HepG2 (cell line): ENCODE measurements at regions of chr12 and their contacts with region 1.

Region 1: DNA sequence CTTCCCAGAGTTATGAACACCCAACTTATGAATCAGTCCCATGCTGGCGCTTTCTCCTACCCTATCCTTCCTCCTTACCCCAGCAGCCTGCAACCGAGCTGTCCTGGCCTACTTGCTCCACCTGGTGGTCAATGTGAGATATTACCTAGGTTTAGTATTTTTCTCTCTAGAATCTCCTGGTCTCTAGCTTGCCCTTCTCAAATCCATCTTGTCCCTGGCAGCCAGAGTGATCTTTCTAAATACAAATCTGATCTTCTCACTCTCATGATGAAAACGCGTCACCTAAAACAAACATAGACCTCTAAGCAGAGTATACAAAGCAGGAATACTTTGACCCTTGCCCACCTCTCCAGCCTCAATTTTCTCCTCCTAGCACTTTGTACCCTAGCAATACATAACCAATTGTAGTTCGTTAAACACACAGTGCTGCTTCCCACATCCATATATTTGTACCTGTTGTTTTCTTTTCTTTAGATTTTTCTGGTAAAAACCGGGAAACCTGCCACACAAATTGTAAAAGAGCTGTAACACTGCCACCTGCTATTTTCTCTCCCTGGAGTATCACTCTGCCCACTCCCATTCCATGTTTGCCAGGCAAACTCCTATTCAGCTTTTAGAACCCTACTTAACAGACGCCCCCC is 20.0 kb upstream of the TCP11L2 start:
- DNase-seq: peak; percentile 97
- ATAC-seq: peak; percentile 94
- H3K4me3 ChIP-seq: peak overlapping the region in 2 of 3 experiments; percentile 9 to 25; a peak in 2 of 6 replicates
- H3K27ac ChIP-seq: peak overlapping the region; percentile 77
- H3K4me1 ChIP-seq: peaks cover 87% of the 10 kb centered on the region
- H3K27me3 ChIP-seq: peaks cover 0 to 17% of the 10 kb centered on the region in 2 experiments; a peak in 2 of 5 replicates
- CTCF ChIP-seq: peak; percentile 89
- EP300 ChIP-seq: peak; percentile 53 to 91; a peak in 3 of 4 replicates
- POLR2A ChIP-seq: no peak
- RAD21 ChIP-seq: peak; percentile 89

Region 2: DNA sequence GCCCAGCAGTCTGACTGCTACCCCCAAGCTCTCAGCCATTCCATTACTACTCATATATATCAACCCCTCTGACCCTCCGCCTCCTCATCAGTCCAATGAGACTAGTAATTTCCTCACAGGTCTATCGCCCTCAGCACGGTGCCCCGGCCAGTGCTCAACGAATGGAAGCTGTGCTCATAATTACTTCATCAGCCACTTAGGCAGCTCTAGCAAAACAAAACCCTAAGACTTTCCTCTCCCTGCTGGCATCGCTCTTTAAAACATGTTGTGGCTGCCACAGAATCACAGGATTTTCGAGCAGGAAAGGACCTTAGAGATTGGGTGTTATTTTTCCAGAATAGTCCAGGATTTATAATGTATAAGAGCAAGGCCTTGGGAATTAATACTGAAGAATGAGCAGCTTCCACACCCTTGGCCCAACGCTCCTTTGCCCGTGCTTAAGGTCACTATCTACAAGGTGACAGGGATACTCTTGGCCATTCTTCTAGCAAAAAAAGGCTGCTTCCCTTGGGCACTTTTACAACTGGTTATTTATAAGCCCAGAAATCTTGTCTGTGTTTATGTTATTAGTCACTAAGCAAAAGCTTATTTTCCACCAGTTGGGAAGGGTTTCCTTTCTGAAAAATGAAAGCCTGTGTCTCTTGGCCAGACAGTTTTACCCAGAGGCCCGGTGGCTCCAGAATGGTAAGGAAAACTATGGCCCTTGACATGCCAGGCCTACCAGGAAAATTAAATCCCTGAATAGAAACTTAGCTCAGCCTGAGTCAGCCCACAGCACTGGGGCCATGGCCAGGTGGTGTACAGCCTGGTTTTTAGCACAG is 191.8 kb before region 1 on chr12:
- CTCF ChIA-PET with region 1: no interaction called
- POLR2A ChIA-PET with region 1: no interaction called
- in situ Hi-C with region 1: loop called (anchors 10 kb)
- intact Hi-C with region 1: no loop called
- DNase-seq: no peak
- ATAC-seq: no peak
- H3K4me3 ChIP-seq: no peak overlapping the region
- H3K27ac ChIP-seq: no peak overlapping the region
- H3K4me1 ChIP-seq: peaks cover 28% of the 10 kb centered on the region
- H3K27me3 ChIP-seq: no peaks in the 10 kb centered on the region
- CTCF ChIP-seq: no peak
- EP300 ChIP-seq: no peak
- POLR2A ChIP-seq: no peak
- RAD21 ChIP-seq: no peak

Region 3: GRCh38 chr12:106223485-106224354 is 58.9 kb before region 1 on chr12:
- CTCF ChIA-PET with region 1: interaction called, 40 read pairs
- POLR2A ChIA-PET with region 1: interaction called, 17 read pairs
- in situ Hi-C with region 1: loop called (anchors 5 kb)
- intact Hi-C with region 1: loop called (anchors 1 kb)
- DNase-seq: peak; percentile 45
- ATAC-seq: peak; percentile 90
- H3K4me3 ChIP-seq: no peak overlapping the region
- H3K27ac ChIP-seq: no peak overlapping the region
- H3K4me1 ChIP-seq: peaks cover 11% of the 10 kb centered on the region
- H3K27me3 ChIP-seq: peaks cover 0 to 4% of the 10 kb centered on the region in 2 experiments; a peak in 1 of 5 replicates
- CTCF ChIP-seq: peak; percentile 93
- EP300 ChIP-seq: no peak
- POLR2A ChIP-seq: no peak
- RAD21 ChIP-seq: peak; percentile 84

Region 4: GRCh38 chr12:106247674-106248311 is 34.8 kb before region 1 on chr12 and contains the start of gene CKAP4:
- CTCF ChIA-PET with region 1: no interaction called
- POLR2A ChIA-PET with region 1: interaction called, 13 read pairs
- in situ Hi-C with region 1: no loop called
- intact Hi-C with region 1: loop called (anchors 2 kb)
- DNase-seq: peak; percentile 30
- ATAC-seq: peak; percentile 71
- H3K4me3 ChIP-seq: peak within 1 kb of the TSS; percentile 80 to 90 (median 83)
- H3K27ac ChIP-seq: peak within 1 kb of the TSS; percentile 68
- H3K4me1 ChIP-seq: peaks cover 49% of the 10 kb centered on the region
- H3K27me3 ChIP-seq: peaks cover 0 to 4% of the 10 kb centered on the region in 2 experiments; a peak in 1 of 5 replicates
- CTCF ChIP-seq: no peak
- EP300 ChIP-seq: no peak
- POLR2A ChIP-seq: peak in 1 of 2 experiments; percentile 45; a peak in 1 of 4 replicates
- RAD21 ChIP-seq: peak; percentile 35; the same call in 1 of the 2 replicates
- total RNA-seq, gene CKAP4: 37.3 and 70.2 TPM in 2 replicates

Region 5: GRCh38 chr12:106296193-106296877 is 13.8 kb after region 1 on chr12:
- CTCF ChIA-PET with region 1: no interaction called
- POLR2A ChIA-PET with region 1: interaction called, 10 read pairs
- in situ Hi-C with region 1: no loop called
- intact Hi-C with region 1: no loop called
- DNase-seq: peak; percentile 80
- ATAC-seq: peak; percentile 82
- H3K4me3 ChIP-seq: no peak overlapping the region
- H3K27ac ChIP-seq: no peak overlapping the region
- H3K4me1 ChIP-seq: peaks cover 51% of the 10 kb centered on the region
- H3K27me3 ChIP-seq: no peaks in the 10 kb centered on the region
- CTCF ChIP-seq: no peak
- EP300 ChIP-seq: peak in 1 of 2 experiments; percentile 51; a peak in 1 of 4 replicates
- POLR2A ChIP-seq: no peak
- RAD21 ChIP-seq: no peak

Region 6: DNA sequence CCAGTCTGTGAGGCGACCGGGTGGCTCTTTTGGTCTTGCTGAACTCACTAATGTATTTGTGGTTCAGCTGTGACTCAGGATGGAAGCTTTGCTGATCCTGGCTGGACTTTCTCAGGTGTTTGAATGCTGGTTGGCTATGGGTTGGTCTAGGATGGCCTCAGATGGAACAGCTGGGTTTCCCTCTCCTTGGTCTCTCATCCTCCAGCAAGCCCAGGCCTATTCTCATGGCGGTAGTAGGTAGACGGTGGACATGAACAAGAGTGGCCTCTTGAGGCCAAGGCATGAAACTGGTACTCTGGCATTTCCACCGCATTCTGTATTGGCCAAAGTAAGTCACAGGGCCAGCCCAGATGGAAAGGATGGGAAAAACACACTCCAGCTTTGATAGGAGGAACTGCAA is 63.2 kb after region 1 on chr12:
- CTCF ChIA-PET with region 1: interaction called, 3 read pairs
- POLR2A ChIA-PET with region 1: interaction called, 3 read pairs
- in situ Hi-C with region 1: no loop called
- intact Hi-C with region 1: loop called (anchors 1 kb)
- DNase-seq: peak; percentile 77
- ATAC-seq: peak; percentile 93
- H3K4me3 ChIP-seq: no peak overlapping the region
- H3K27ac ChIP-seq: no peak overlapping the region
- H3K4me1 ChIP-seq: peaks cover 20% of the 10 kb centered on the region
- H3K27me3 ChIP-seq: peaks cover 0 to 4% of the 10 kb centered on the region in 2 experiments; a peak in 1 of 5 replicates
- CTCF ChIP-seq: peak; percentile 86
- EP300 ChIP-seq: no peak
- POLR2A ChIP-seq: no peak
- RAD21 ChIP-seq: peak; percentile 86